PC-9 (cell line): ENCODE measurements at regions of chr2 and their contacts with region 1.

Region 1: DNA sequence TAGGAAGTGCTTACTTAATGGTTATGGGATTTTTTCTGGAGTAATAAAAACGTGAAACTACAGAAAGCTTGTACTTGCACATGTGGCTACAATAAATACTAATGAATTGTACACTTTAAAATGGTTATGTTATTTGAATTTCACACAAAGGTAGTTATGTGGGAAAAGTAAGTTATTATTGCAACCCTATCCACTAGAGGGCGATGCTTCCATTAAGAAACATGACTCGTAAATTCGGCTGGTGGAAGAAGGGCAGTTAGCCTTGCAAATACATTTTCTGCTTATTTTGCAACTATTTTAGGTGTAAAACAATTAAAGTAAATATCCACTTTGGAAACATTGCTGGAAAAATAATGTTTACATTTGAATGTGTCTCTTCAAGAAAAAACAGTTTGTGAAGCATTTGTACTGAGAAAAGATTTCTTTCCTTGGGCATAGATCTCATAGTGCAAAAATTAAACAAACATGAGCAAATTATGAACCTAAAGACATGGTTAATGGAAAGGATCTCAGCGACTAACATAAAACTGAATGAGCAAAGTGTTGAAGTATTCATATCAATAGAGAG is 68.1 kb upstream of the CSRNP3 start:
- DNase-seq: no peak
- H3K4me3 ChIP-seq: no peak overlapping the region
- H3K27ac ChIP-seq: no peak overlapping the region
- H3K4me1 ChIP-seq: no peaks in the 10 kb centered on the region
- H3K27me3 ChIP-seq: no peaks in the 10 kb centered on the region
- CTCF ChIP-seq: peak; percentile 69

Region 2: GRCh38 chr2:165313509-165313908 is 87.9 kb before region 1 on chr2:
- CTCF ChIA-PET with region 1: no interaction called
- POLR2A ChIA-PET with region 1: no interaction called
- intact Hi-C with region 1: no loop called
- DNase-seq: no peak
- H3K4me3 ChIP-seq: no peak overlapping the region
- H3K27ac ChIP-seq: no peak overlapping the region
- H3K4me1 ChIP-seq: no peaks in the 10 kb centered on the region
- H3K27me3 ChIP-seq: no peaks in the 10 kb centered on the region
- CTCF ChIP-seq: no peak

Region 3: GRCh38 chr2:165698444-165698894 is 297.1 kb after region 1 on chr2:
- CTCF ChIA-PET with region 1: no interaction called
- POLR2A ChIA-PET with region 1: no interaction called
- intact Hi-C with region 1: loop called (anchors 1 kb)
- DNase-seq: peak in 1 of 2 experiments; percentile 14
- H3K4me3 ChIP-seq: no peak overlapping the region
- H3K27ac ChIP-seq: no peak overlapping the region
- H3K4me1 ChIP-seq: no peaks in the 10 kb centered on the region
- H3K27me3 ChIP-seq: no peaks in the 10 kb centered on the region
- CTCF ChIP-seq: peak; percentile 44

Region 4: DNA sequence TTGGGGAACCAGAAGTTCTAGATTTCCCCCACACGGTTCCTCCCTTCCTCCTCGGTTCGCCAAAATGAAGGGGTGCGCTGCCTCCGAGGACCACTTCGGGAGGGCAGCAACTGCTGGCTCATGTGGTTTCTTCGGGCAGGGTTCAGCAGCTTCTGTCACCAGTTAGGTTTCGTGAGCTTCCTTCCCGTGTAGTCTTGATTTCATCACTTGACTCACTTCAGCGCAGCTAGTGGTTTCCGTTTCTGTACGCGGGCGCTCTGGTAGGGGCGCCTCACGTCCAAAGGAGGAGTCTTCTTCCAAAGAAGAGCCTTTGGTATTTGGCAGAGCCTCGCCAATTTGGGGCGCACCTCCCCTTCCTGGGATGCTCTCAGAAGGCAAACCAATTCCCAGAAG is 393.2 kb after region 1 on chr2:
- CTCF ChIA-PET with region 1: no interaction called
- POLR2A ChIA-PET with region 1: no interaction called
- intact Hi-C with region 1: loop called (anchors 2 kb)
- DNase-seq: peak; percentile 41 to 52
- H3K4me3 ChIP-seq: peak overlapping the region; percentile 90
- H3K27ac ChIP-seq: peak overlapping the region; percentile 98
- H3K4me1 ChIP-seq: peaks cover 33% of the 10 kb centered on the region
- H3K27me3 ChIP-seq: no peaks in the 10 kb centered on the region
- CTCF ChIP-seq: no peak